ENCODE measurements at regions of chr9 and their contacts with region 1.

Region 1: DNA sequence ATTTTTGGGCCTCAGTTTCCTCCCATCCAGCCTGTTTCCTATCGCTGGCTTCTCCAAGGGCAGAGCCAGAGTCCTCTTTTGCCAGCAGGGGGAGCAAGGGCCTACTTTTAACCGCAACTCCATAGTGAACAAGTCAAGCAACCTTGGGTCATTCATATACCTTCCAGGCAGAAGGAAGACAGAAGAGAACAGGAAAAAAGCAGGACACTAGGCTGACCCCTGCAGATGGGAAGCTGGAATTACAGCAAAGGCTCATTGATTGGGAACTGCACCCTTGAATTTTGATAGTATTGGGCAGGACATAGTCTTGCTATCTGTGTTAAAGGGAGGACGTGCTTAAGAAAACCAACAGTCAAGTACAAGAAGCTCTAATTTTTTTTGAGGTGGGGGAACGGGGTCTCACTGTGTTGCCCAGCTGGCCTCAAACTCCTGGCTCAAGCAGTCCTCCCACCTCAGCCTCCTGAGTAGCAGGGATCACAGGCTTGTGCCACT is 30.1 kb downstream of the QRFP start:
- DNase-seq: peak; percentile 74
- ATAC-seq: peak; percentile 67
- H3K4me3 Mint-ChIP-seq: no peak overlapping the region
- H3K27ac Mint-ChIP-seq: no peak overlapping the region
- H3K4me1 Mint-ChIP-seq: no peaks in the 10 kb centered on the region
- H3K27me3 Mint-ChIP-seq: no peaks in the 10 kb centered on the region
- CTCF ChIP-seq: peak; percentile 92

Region 2: DNA sequence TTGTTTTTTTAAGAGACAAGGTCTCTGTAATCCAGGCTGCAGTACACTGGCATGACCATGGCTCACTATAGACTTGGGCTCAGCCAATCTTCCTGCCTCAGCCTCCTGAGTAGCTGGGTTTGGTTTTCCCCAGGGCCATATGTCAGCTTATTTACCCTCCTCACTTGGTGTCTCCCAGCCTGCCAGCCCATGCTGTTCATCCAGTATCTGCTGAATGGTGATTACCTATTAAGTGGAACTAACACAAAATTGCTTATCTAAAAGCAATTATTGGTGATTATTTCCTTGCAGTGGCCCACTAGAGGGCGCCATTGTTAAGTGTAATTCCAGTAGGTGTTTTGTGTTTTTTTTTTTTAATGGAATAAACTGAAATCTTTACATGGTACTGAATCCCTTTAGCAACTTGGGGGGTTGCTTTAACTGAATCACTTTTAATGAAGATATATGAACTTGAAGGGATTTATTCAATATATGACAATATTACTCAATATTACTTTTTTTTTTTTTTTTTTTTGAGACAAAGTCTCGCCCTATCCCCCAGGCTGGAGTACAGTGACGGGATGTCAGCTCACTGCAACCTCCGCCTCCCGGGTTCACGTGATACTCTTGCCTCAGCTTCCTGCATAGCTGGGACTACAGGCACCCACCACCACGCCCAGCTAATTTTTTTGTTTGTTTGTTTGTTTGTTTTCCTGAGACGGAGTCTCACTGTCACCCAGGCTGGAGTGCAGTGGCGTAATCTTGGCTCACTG is 159.1 kb before region 1 on chr9:
- CTCF ChIA-PET with region 1: interaction called, 74 read pairs
- POLR2A ChIA-PET with region 1: interaction called, 4 read pairs
- intact Hi-C with region 1: loop called (anchors 10 kb)
- DNase-seq: peak; percentile 84
- ATAC-seq: peak; percentile 60
- H3K4me3 Mint-ChIP-seq: no peak overlapping the region
- H3K27ac Mint-ChIP-seq: peak overlapping the region; percentile 42
- H3K4me1 Mint-ChIP-seq: peaks cover 1% of the 10 kb centered on the region
- H3K27me3 Mint-ChIP-seq: no peaks in the 10 kb centered on the region
- CTCF ChIP-seq: peak; percentile 85

Region 3: DNA sequence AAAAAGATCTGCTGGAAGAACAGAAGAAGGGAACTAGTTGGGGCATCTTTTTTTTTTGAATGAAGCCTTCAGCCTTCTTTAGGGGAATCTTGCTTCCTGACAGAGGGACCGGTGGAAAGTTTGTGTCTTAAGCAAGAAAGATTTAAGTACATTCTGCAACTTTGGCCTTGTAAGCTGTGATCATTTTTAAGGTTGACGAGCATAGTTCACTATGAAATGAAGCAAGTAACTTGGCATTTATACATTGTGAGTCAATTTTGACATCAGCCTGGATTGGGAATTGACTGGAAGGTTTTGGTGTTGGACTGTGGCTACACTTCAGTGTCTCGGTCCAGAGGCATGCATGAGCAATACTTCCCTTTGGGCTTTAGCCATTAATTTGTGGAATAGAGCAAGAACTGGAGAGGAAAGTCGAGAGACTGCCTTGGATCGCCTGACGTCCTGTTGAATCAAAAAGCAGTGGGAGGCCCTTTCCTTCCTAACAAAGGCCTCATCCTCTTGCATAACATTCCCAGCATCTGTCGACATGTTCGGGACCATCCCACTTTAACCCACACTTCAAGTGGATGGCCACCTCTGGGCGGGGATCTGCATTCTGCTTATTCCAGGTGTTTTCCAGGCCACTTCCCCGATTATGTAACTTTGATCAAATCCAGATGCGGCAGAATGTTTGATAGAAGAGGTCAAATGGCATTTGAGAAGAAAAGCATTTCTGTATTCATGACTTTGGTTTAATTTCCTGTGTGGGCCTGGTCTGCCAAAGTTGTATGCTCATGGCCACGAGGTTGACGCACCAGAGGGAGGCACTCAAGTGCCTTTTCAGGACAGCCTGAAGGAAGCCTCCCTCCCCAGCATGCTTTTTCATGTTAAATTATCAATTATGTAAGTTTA is 18.9 kb before region 1 on chr9:
- CTCF ChIA-PET with region 1: interaction called, 10 read pairs
- POLR2A ChIA-PET with region 1: no interaction called
- intact Hi-C with region 1: no loop called
- DNase-seq: no peak
- ATAC-seq: no peak
- H3K4me3 Mint-ChIP-seq: no peak overlapping the region
- H3K27ac Mint-ChIP-seq: no peak overlapping the region
- H3K4me1 Mint-ChIP-seq: peaks cover 13% of the 10 kb centered on the region
- H3K27me3 Mint-ChIP-seq: no peaks in the 10 kb centered on the region
- CTCF ChIP-seq: no peak

Region 4: GRCh38 chr9:130932255-130933079 is 65.9 kb after region 1 on chr9:
- CTCF ChIA-PET with region 1: interaction called, 5 read pairs
- POLR2A ChIA-PET with region 1: no interaction called
- intact Hi-C with region 1: loop called (anchors 5 kb)
- DNase-seq: no peak
- ATAC-seq: no peak
- H3K4me3 Mint-ChIP-seq: no peak overlapping the region
- H3K27ac Mint-ChIP-seq: no peak overlapping the region
- H3K4me1 Mint-ChIP-seq: no peaks in the 10 kb centered on the region
- H3K27me3 Mint-ChIP-seq: peaks cover 27% of the 10 kb centered on the region
- CTCF ChIP-seq: no peak

Region 5: DNA sequence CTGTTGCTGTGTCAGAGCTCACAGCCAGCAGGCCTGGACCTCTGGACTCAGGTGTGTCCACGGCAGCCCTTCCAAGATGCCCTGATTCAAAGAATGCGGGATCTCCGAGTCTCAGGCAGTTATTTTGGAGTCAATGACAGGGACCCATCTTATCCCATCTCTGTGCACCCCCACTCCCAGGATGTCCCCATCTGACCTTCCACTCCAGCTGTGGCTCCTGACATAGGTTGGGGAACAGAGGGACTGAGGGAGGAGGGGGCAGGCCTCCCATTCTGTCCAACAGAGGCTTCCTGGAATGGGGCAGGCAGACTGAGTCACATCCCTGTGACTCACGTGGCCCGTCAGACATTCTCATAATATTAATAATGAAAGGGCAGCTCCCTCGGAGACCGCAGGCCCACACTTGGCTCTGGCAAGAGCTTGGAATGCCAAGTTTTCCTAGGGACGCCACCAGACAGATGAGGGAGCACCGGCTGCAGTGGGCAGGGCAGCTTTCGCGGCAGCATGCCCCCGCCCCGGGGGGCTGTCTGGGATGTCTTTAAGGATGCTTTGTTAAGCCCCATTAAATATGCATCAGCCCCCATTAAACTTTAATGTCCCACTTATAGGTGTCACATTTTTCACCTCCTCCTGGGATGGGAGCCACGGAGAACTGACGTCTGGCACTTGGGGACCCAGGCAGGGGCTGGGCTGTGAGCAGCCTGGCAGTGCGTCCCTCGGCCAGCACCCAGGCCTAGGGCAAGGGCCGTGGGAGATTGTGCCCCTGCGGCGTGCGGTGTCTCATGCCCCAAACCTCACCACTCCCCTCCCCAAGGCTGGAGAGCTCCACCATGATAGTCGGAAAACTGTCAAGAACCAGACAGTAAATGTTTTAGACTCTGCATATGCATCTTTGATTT is 96.1 kb after region 1 on chr9:
- CTCF ChIA-PET with region 1: no interaction called
- POLR2A ChIA-PET with region 1: no interaction called
- intact Hi-C with region 1: no loop called
- DNase-seq: no peak
- ATAC-seq: no peak
- H3K4me3 Mint-ChIP-seq: no peak overlapping the region
- H3K27ac Mint-ChIP-seq: no peak overlapping the region
- H3K4me1 Mint-ChIP-seq: peaks cover 2% of the 10 kb centered on the region
- H3K27me3 Mint-ChIP-seq: no peaks in the 10 kb centered on the region
- CTCF ChIP-seq: no peak